ENCODE measurements at regions of chr11 and their contacts with region 1.

Region 1: DNA sequence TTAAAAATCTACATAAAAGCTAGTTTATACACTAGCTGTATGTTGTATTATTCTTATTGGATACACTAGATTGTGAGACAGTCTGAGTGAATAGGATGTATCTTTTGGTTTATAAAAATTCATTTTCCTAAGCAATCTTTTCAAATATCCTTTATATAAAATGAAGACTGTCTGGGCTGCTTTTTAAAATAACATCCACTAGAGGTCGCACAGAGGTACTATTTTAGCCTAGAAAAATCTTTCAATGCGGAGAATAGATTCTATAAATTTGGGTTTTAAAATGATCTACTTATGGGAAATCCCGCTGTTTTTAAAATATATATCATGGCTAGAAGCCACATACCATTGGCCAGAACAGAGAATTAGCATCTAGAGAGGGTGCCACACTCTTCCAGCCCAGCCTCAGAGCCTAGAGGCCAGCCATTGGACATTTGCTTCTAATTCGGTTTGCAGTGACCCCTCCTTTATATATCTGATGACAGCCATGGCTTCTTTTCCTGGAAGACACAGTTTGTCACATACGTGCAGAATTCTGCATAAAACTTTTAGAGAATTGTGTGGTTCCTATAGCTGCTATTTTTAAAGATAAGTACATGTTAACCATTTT is 7.3 kb downstream of the C11orf97 start:
- DNase-seq: no peak
- H3K4me3 ChIP-seq: no peak overlapping the region
- H3K27ac ChIP-seq: no peak overlapping the region
- H3K4me1 ChIP-seq: no peaks in the 10 kb centered on the region
- H3K27me3 ChIP-seq: peaks cover 0 to 3% (median 0%) of the 10 kb centered on the region in 4 donors
- CTCF ChIP-seq: peak; percentile 58 to 70 (median 67)
- POLR2A ChIP-seq: no peak

Region 2: GRCh38 chr11:94593030-94593429 is 73.4 kb after region 1 on chr11:
- intact Hi-C with region 1: loop called (anchors 10 kb)
- DNase-seq: no peak
- H3K4me3 ChIP-seq: no peak overlapping the region
- H3K27ac ChIP-seq: no peak overlapping the region
- H3K4me1 ChIP-seq: no peaks in the 10 kb centered on the region
- H3K27me3 ChIP-seq: no peaks in the 10 kb centered on the region
- CTCF ChIP-seq: no peak
- POLR2A ChIP-seq: no peak

Measured in esophagus squamous epithelium (tissue), 5 donors.